Naive thymus-derived CD4-positive, alpha-beta T cell (primary cell): ENCODE measurements at regions of chr18 and their contacts with region 1.

Region 1: GRCh38 chr18:63025251-63026090 is 294.1 kb downstream of the BCL2 start:
- DNase-seq: no peak
- ATAC-seq: no peak
- H3K4me3 ChIP-seq: no peak overlapping the region
- H3K4me3 Mint-ChIP-seq: no peak overlapping the region
- H3K27ac ChIP-seq: no peak overlapping the region
- H3K27ac Mint-ChIP-seq: no peak overlapping the region
- H3K4me1 ChIP-seq: no peaks in the 10 kb centered on the region
- H3K4me1 Mint-ChIP-seq: no peaks in the 10 kb centered on the region
- H3K27me3 ChIP-seq: no peaks in the 10 kb centered on the region
- H3K27me3 Mint-ChIP-seq: peaks cover 0 to 14% (median 0%) of the 10 kb centered on the region in 5 donors

Region 2: GRCh38 chr18:63098018-63098981 is 72.8 kb after region 1 on chr18:
- CTCF ChIA-PET with region 1: no interaction called
- POLR2A ChIA-PET with region 1: no interaction called
- intact Hi-C with region 1: loop called in 1 of 2 experiments (anchors 5 kb)
- DNase-seq: peak in 8 of 9 donors; percentile 41 to 69 (median 58)
- ATAC-seq: peak; percentile 67
- H3K4me3 ChIP-seq: peak overlapping the region; percentile 11
- H3K4me3 Mint-ChIP-seq: peak overlapping the region; percentile 34 to 82 (median 76)
- H3K27ac ChIP-seq: no peak overlapping the region
- H3K27ac Mint-ChIP-seq: peak overlapping the region; percentile 43 to 93 (median 85)
- H3K4me1 ChIP-seq: peaks cover 23 to 30% of the 10 kb centered on the region in 2 donors
- H3K4me1 Mint-ChIP-seq: peaks cover 46 to 69% (median 60%) of the 10 kb centered on the region in 7 donors
- H3K27me3 ChIP-seq: no peaks in the 10 kb centered on the region
- H3K27me3 Mint-ChIP-seq: peaks cover 0 to 41% (median 0%) of the 10 kb centered on the region in 5 donors

Region 3: GRCh38 chr18:63119647-63120046 is 94.2 kb after region 1 on chr18:
- CTCF ChIA-PET with region 1: no interaction called
- POLR2A ChIA-PET with region 1: no interaction called
- intact Hi-C with region 1: loop called in 1 of 2 experiments (anchors 5 kb)
- DNase-seq: no peak
- ATAC-seq: no peak
- H3K4me3 ChIP-seq: no peak overlapping the region
- H3K4me3 Mint-ChIP-seq: no peak overlapping the region
- H3K27ac ChIP-seq: no peak overlapping the region
- H3K27ac Mint-ChIP-seq: peak overlapping the region in 2 of 9 donors; percentile 6 to 77
- H3K4me1 ChIP-seq: no peaks in the 10 kb centered on the region
- H3K4me1 Mint-ChIP-seq: peaks cover 4 to 21% (median 9%) of the 10 kb centered on the region in 7 donors
- H3K27me3 ChIP-seq: no peaks in the 10 kb centered on the region
- H3K27me3 Mint-ChIP-seq: peaks cover 0 to 36% (median 0%) of the 10 kb centered on the region in 5 donors

Region 4: GRCh38 chr18:63141778-63142176 is 116.3 kb after region 1 on chr18:
- CTCF ChIA-PET with region 1: no interaction called
- POLR2A ChIA-PET with region 1: no interaction called
- intact Hi-C with region 1: no loop called
- DNase-seq: no peak
- ATAC-seq: no peak
- H3K4me3 ChIP-seq: no peak overlapping the region
- H3K4me3 Mint-ChIP-seq: no peak overlapping the region
- H3K27ac ChIP-seq: no peak overlapping the region
- H3K27ac Mint-ChIP-seq: peak overlapping the region in 4 of 9 donors; percentile 0 to 68 (median 38)
- H3K4me1 ChIP-seq: peaks cover 25% of the 10 kb centered on the region in 2 donors
- H3K4me1 Mint-ChIP-seq: peaks cover 52 to 87% (median 73%) of the 10 kb centered on the region in 7 donors
- H3K27me3 ChIP-seq: no peaks in the 10 kb centered on the region
- H3K27me3 Mint-ChIP-seq: no peaks in the 10 kb centered on the region